CD14-positive monocyte (primary cell): ENCODE measurements at regions of chr17 and their contacts with region 1.

Region 1: GRCh38 chr17:48074315-48075081 is 26.3 kb downstream of the NFE2L1 start:
- DNase-seq: peak; percentile 54 to 76 (median 66)
- H3K4me3 ChIP-seq: no peak overlapping the region
- H3K4me3 Mint-ChIP-seq: no peak overlapping the region
- H3K27ac ChIP-seq: no peak overlapping the region
- H3K27ac Mint-ChIP-seq: peak overlapping the region in 1 of 7 donors; percentile 46
- H3K4me1 ChIP-seq: no peaks in the 10 kb centered on the region
- H3K4me1 Mint-ChIP-seq: peaks cover 1% of the 10 kb centered on the region
- H3K27me3 ChIP-seq: no peaks in the 10 kb centered on the region
- H3K27me3 Mint-ChIP-seq: no peaks in the 10 kb centered on the region
- CTCF ChIP-seq: peak; percentile 88

Region 2: DNA sequence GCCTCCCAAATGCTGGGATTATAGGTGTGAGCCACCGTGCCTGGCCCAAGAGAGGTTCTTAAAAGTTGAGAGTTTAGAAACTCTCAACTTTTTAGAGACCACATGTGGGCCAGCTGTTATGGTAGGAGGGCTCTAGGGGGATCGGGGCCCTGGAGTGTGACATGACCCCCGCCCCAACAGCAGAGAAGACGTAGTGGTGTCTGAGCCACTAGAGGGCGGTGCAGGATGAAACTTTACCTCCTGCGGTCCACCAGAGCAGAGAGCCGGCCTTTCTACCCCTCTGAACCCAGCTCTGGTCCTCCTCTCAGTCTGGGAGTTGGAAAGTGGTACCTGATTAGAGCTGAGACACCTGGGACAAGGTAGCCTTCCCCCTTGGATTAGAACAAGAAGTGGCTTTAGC is 96.2 kb before region 1 on chr17:
- intact Hi-C with region 1: loop called in 1 of 2 experiments (anchors 5 kb)
- DNase-seq: peak; percentile 52 to 58 (median 57)
- H3K4me3 ChIP-seq: no peak overlapping the region
- H3K4me3 Mint-ChIP-seq: no peak overlapping the region
- H3K27ac ChIP-seq: no peak overlapping the region
- H3K27ac Mint-ChIP-seq: no peak overlapping the region
- H3K4me1 ChIP-seq: peaks cover 19 to 40% of the 10 kb centered on the region in 2 donors
- H3K4me1 Mint-ChIP-seq: peaks cover 41% of the 10 kb centered on the region
- H3K27me3 ChIP-seq: no peaks in the 10 kb centered on the region
- H3K27me3 Mint-ChIP-seq: peaks cover 0 to 2% (median 1%) of the 10 kb centered on the region in 3 donors
- CTCF ChIP-seq: peak; percentile 77